CD14-positive monocyte (primary cell): ENCODE measurements at regions of chr7 and their contacts with region 1.

Region 1: DNA sequence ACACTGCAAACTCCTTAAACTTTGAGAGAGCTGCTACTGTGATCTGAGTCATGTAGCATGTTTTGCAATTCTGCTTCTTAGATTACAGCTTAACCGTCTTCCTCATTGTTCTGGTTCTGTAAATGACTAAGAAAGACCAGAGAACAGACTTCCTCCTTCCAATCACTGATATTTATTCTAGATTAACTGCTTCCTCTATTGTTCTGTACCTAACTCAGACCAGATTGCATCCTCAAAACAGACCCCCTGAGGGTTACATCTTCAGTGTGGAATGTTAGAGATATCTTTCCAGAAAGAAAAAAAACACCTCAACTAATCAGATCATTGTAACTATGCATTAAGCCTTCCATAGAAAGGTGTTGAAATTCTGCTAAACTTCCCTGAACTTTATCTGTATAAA is 5.7 kb upstream of the PIP start:
- DNase-seq: peak; percentile 83 to 96 (median 91)
- H3K4me3 ChIP-seq: peak overlapping the region in 1 of 3 experiments; percentile 7
- H3K4me3 Mint-ChIP-seq: no peak overlapping the region
- H3K27ac ChIP-seq: peak overlapping the region in 1 of 2 donors; percentile 67
- H3K27ac Mint-ChIP-seq: peak overlapping the region; percentile 38 to 88 (median 65)
- H3K4me1 ChIP-seq: peaks cover 40 to 47% of the 10 kb centered on the region in 2 donors
- H3K4me1 Mint-ChIP-seq: peaks cover 43% of the 10 kb centered on the region
- H3K27me3 ChIP-seq: no peaks in the 10 kb centered on the region
- H3K27me3 Mint-ChIP-seq: no peaks in the 10 kb centered on the region
- CTCF ChIP-seq: no peak

Region 2: DNA sequence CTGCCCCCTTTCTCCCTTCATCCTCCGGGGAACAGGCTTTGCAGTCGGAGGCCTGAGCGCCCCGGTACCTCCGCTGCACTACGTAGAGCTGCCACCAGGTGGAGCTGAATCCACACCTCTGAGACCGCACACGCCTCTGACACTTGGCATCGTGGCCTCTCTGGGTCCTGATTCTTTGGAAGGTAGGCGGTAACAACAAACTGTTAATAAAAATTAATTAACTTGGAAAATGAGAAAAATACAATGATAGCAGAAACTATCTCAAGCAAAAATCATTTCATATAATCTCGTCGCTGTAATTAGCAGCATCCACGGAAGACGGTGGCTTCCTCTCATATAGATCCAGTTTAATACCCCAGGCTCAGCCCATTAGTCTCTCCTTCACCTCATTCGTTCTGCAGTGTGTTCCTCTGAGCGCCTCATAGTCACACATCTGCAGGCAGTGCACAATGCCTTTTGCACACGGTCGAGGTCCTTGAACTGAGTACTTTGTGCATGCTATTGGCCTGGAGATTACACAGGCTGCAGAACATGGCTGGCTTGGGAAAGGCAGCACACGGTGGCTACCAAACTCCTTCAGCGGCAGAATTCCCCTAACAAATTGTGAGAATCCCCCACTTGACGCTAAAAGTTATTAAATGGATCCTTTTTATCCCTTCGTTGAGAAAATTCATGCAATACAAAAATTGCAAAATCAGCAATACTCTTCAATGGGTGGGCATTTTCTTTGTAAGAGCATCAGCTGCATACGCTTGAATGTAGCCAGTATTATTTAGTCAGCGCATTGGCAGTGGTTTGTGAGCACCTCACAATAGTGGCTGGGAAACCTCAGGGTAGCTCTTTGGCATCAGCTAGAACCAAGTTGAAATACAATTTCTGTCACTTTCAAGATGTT is 117.9 kb before region 1 on chr7:
- intact Hi-C with region 1: no loop called
- DNase-seq: peak; percentile 67 to 73 (median 73)
- H3K4me3 ChIP-seq: no peak overlapping the region
- H3K4me3 Mint-ChIP-seq: no peak overlapping the region
- H3K27ac ChIP-seq: no peak overlapping the region
- H3K27ac Mint-ChIP-seq: peak overlapping the region in 1 of 7 donors; percentile 34
- H3K4me1 ChIP-seq: peaks cover 0 to 5% of the 10 kb centered on the region in 2 donors
- H3K4me1 Mint-ChIP-seq: peaks cover 9% of the 10 kb centered on the region
- H3K27me3 ChIP-seq: no peaks in the 10 kb centered on the region
- H3K27me3 Mint-ChIP-seq: peaks cover 3 to 7% (median 5%) of the 10 kb centered on the region in 3 donors
- CTCF ChIP-seq: peak; percentile 93

Region 3: GRCh38 chr7:143205560-143206293 is 79.6 kb after region 1 on chr7:
- intact Hi-C with region 1: loop called (anchors 5 kb)
- DNase-seq: peak; percentile 83 to 89 (median 84)
- H3K4me3 ChIP-seq: peak overlapping the region; percentile 35 to 66 (median 47)
- H3K4me3 Mint-ChIP-seq: peak overlapping the region; percentile 67 to 85
- H3K27ac ChIP-seq: peak overlapping the region; percentile 7 to 74
- H3K27ac Mint-ChIP-seq: peak overlapping the region; percentile 58 to 94 (median 90)
- H3K4me1 ChIP-seq: peaks cover 25 to 33% of the 10 kb centered on the region in 2 donors
- H3K4me1 Mint-ChIP-seq: peaks cover 44% of the 10 kb centered on the region
- H3K27me3 ChIP-seq: no peaks in the 10 kb centered on the region
- H3K27me3 Mint-ChIP-seq: peaks cover 0 to 3% (median 3%) of the 10 kb centered on the region in 3 donors
- CTCF ChIP-seq: no peak